Activated CD4-positive, alpha-beta T cell treated with anti-CD3 and anti-CD28 coated beads for 36 hours (primary cell): ENCODE measurements at regions of chr4 and their contacts with region 1.

Region 1: GRCh38 chr4:89077761-89078160 is 20.8 kb upstream of the FAM13A start:
- DNase-seq: no peak
- ATAC-seq: no peak
- H3K4me3 Mint-ChIP-seq: no peak overlapping the region
- H3K27ac Mint-ChIP-seq: no peak overlapping the region
- H3K4me1 Mint-ChIP-seq: peaks cover 12% of the 10 kb centered on the region
- H3K27me3 Mint-ChIP-seq: peaks cover 4% of the 10 kb centered on the region

Region 2: GRCh38 chr4:88369936-88370335 is 707.8 kb before region 1 on chr4:
- CTCF ChIA-PET with region 1: no interaction called
- POLR2A ChIA-PET with region 1: no interaction called
- intact Hi-C with region 1: no loop called
- DNase-seq: no peak
- ATAC-seq: no peak
- H3K4me3 Mint-ChIP-seq: no peak overlapping the region
- H3K27ac Mint-ChIP-seq: no peak overlapping the region
- H3K4me1 Mint-ChIP-seq: no peaks in the 10 kb centered on the region
- H3K27me3 Mint-ChIP-seq: peaks cover 2% of the 10 kb centered on the region

Region 3: GRCh38 chr4:88481537-88481936 is 596.2 kb before region 1 on chr4:
- CTCF ChIA-PET with region 1: no interaction called
- POLR2A ChIA-PET with region 1: no interaction called
- intact Hi-C with region 1: no loop called
- DNase-seq: no peak
- ATAC-seq: no peak
- H3K4me3 Mint-ChIP-seq: no peak overlapping the region
- H3K27ac Mint-ChIP-seq: no peak overlapping the region
- H3K4me1 Mint-ChIP-seq: no peaks in the 10 kb centered on the region
- H3K27me3 Mint-ChIP-seq: no peaks in the 10 kb centered on the region

Region 4: DNA sequence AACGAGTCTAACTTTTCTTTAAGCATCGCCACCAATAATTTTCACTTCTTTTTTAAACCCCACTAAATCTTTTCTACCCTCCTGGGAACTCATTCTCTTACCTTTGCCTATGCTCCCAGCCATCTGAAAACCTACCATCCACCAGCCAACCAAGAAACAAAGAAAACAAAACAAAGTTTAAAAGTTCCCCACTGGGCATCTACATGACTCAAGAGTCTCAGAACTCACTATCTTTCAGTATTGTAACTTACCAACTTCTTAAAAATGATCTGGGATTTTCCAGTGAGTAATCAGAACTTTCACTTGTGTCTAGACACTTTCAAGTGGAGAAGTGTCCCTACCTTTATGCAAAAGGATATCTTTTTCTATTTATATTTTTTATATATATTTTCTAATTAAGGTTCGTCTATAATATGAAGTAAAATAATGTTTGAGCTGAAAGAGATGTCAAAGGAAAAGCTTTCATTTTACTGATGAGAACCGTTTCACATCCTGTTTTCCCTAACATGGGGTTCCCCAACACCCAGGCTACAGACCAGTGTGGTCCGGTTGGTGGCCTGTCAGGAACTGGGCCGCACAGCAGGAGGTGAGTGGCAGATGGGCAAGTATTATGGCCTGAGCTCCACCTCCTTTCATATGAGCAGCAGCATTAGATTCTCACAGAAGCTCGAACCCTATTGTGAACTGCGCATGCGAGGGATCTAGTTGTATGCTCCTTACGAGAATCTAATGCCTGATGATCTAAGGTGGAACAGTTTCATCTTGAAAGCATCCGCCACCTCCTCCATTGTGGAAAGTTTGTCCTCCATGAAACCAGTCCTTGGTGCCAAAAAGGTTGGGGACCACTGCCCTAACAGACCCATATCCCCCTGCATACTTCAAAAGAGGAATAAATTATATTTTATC is 23.7 kb after region 1 on chr4:
- CTCF ChIA-PET with region 1: no interaction called
- POLR2A ChIA-PET with region 1: no interaction called
- intact Hi-C with region 1: loop called (anchors 1 kb)
- DNase-seq: peak; percentile 16
- ATAC-seq: peak; percentile 90
- H3K4me3 Mint-ChIP-seq: no peak overlapping the region
- H3K27ac Mint-ChIP-seq: peak overlapping the region; percentile 44
- H3K4me1 Mint-ChIP-seq: peaks cover 21% of the 10 kb centered on the region
- H3K27me3 Mint-ChIP-seq: peaks cover 2% of the 10 kb centered on the region